PC-3 (cell line): ENCODE measurements at regions of chr14 and their contacts with region 1.

Region 1: GRCh38 chr14:49971156-49972130 is 78.6 kb downstream of the ARF6 start:
- DNase-seq: peak; percentile 43
- ATAC-seq: peak; percentile 0
- H3K4me3 ChIP-seq: peak overlapping the region; percentile 38
- H3K27ac ChIP-seq: peak overlapping the region; percentile 95
- H3K4me1 ChIP-seq: peaks cover 79% of the 10 kb centered on the region
- H3K27me3 ChIP-seq: no peaks in the 10 kb centered on the region
- CTCF ChIP-seq: no peak

Region 2: GRCh38 chr14:49796025-49796424 is 175.4 kb before region 1 on chr14:
- CTCF ChIA-PET with region 1: no interaction called
- POLR2A ChIA-PET with region 1: interaction called, 21 read pairs
- intact Hi-C with region 1: no loop called
- DNase-seq: peak; percentile 79
- ATAC-seq: peak; percentile 92
- H3K4me3 ChIP-seq: no peak overlapping the region
- H3K27ac ChIP-seq: no peak overlapping the region
- H3K4me1 ChIP-seq: peaks cover 11% of the 10 kb centered on the region
- H3K27me3 ChIP-seq: no peaks in the 10 kb centered on the region
- CTCF ChIP-seq: no peak

Region 3: DNA sequence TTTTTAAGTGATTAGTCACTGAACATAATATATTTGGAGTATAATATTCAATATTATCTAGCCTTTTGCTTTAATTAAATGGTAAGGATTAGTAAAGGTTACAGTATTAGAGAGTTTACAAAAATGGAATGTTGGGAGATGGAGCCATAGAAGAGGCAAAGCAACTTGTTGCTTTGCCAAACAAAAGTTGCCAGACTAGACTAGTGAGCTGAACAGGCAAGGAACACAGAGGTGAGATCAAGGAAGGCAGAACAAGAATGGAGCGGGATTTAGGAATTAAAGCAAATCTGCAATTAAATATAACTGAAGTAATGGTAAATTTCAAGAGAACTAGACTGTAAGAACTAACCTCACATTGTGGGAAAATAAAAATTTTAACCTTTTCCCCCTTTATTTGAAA is 73.5 kb before region 1 on chr14:
- CTCF ChIA-PET with region 1: interaction called, 3 read pairs
- POLR2A ChIA-PET with region 1: interaction called, 6 read pairs
- intact Hi-C with region 1: loop called (anchors 2 kb)
- DNase-seq: peak; percentile 73
- ATAC-seq: peak; percentile 28
- H3K4me3 ChIP-seq: peak overlapping the region; percentile 91
- H3K27ac ChIP-seq: peak overlapping the region; percentile 24
- H3K4me1 ChIP-seq: peaks cover 32% of the 10 kb centered on the region
- H3K27me3 ChIP-seq: no peaks in the 10 kb centered on the region
- CTCF ChIP-seq: no peak

Region 4: DNA sequence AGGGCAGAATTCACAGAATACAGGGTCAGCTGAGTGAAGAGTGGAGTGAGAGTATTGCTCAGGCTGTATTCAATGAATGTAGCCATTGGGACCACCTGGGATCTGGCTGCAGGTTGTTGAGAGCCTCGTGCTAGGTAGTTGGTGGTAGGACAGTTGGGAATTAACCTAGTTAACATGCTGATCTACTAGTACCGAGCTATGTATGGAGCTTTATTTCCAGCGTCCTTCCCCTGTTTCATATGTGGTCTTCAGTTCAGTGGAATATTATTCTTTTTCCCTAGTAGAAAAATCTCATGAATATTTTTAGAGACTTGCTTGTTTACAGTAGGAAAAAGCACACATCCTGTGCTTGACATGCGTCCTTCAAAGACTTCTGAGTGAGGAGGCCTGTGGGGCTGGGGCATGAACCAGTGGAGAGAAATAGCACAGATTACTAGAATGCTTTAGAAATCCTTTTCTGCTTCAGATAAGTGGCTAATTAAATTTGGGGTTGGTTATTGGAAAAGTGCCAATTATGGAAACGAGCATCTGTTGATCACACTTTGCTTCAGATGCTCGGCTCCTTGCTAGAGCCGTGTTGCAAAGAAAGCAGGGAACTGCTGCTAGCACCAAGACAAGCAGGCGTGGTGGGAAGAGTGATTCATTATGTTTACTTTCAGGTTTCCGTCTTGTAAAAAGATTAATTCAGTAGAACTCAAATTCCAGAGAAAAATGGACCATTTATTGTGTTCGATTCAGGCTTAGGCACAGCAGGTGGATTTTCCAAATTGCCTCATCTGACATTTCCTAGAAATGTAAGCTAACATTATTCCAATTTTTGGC is 24.9 kb before region 1 on chr14:
- CTCF ChIA-PET with region 1: no interaction called
- POLR2A ChIA-PET with region 1: interaction called, 4 read pairs
- intact Hi-C with region 1: loop called (anchors 1 kb)
- DNase-seq: peak; percentile 93
- ATAC-seq: peak; percentile 82
- H3K4me3 ChIP-seq: peak overlapping the region; percentile 23; the same call in 1 of the 2 replicates
- H3K27ac ChIP-seq: peak overlapping the region; percentile 65
- H3K4me1 ChIP-seq: peaks cover 50% of the 10 kb centered on the region
- H3K27me3 ChIP-seq: no peaks in the 10 kb centered on the region
- CTCF ChIP-seq: no peak

Region 5: GRCh38 chr14:49959822-49960408 is 11.5 kb before region 1 on chr14:
- CTCF ChIA-PET with region 1: interaction called, 5 read pairs
- POLR2A ChIA-PET with region 1: no interaction called
- intact Hi-C with region 1: loop called (anchors 1 kb)
- DNase-seq: no peak
- ATAC-seq: no peak
- H3K4me3 ChIP-seq: no peak overlapping the region
- H3K27ac ChIP-seq: no peak overlapping the region
- H3K4me1 ChIP-seq: peaks cover 30% of the 10 kb centered on the region
- H3K27me3 ChIP-seq: no peaks in the 10 kb centered on the region
- CTCF ChIP-seq: no peak

Region 6: GRCh38 chr14:50031602-50032290 is 60.3 kb after region 1 on chr14:
- CTCF ChIA-PET with region 1: no interaction called
- POLR2A ChIA-PET with region 1: no interaction called
- intact Hi-C with region 1: no loop called
- DNase-seq: no peak
- ATAC-seq: no peak
- H3K4me3 ChIP-seq: no peak overlapping the region
- H3K27ac ChIP-seq: no peak overlapping the region
- H3K4me1 ChIP-seq: no peaks in the 10 kb centered on the region
- H3K27me3 ChIP-seq: no peaks in the 10 kb centered on the region
- CTCF ChIP-seq: no peak

Region 7: DNA sequence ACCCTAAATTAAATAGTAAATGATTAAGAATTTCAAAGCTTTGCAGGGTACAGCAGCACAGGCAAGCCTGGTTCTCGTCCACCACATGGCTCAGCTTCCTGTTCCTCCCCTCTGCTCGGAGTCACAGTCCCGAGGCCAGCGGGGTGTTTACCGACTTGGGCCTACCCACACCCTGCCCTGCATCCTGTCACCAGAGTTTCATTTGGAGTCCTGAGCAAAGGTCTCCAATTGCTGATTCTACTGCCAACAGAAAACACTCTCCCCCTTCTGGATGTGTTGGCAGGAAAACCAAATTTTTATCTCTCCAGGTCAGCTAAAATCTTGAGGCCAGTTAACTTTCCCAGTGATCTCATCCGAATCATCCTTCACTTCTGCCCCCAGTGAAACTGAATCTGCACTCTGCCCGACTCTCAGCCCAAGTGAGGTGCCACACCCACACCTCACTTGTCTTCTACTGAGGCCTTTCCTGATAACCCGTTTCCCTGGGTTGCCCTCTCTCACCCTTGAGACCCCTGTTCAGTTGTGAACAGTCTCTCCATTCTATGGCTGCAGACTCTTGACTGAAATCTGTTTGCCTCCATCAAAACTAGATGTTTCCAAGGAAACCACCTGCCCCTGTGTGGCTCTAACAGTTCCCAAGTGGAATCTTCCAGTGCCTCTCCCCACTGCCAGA is 73.7 kb after region 1 on chr14:
- CTCF ChIA-PET with region 1: interaction called, 5 read pairs
- POLR2A ChIA-PET with region 1: no interaction called
- intact Hi-C with region 1: loop called (anchors 2 kb)
- DNase-seq: peak; percentile 97
- ATAC-seq: peak; percentile 89
- H3K4me3 ChIP-seq: no peak overlapping the region
- H3K27ac ChIP-seq: peak overlapping the region; percentile 97
- H3K4me1 ChIP-seq: peaks cover 59% of the 10 kb centered on the region
- H3K27me3 ChIP-seq: no peaks in the 10 kb centered on the region
- CTCF ChIP-seq: peak; percentile 31; the same call in 1 of the 2 replicates